ENCODE measurements at regions of chr2 and their contacts with region 1.

Region 1: DNA sequence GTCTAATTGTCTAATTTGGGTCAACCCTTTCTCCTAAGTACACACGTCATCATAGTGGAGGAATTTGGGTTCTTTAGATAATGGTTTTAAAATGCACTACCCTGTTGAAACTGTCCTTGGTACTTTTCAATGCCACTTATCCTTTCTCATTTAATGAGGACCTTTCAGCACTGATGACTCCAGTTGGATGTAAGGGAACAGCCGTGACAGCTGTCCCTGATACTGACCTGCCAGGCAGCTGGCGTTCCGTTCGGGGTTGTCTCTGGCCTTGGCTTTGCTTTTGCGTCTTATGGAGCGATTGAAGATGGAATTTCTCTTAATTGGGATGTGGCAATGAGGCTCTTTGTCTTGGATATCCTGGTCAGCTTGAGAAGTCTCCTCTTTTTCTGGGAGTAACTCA is 38.7 kb downstream of the NGEF start:
- DNase-seq: no peak
- ATAC-seq: no peak

Region 2: DNA sequence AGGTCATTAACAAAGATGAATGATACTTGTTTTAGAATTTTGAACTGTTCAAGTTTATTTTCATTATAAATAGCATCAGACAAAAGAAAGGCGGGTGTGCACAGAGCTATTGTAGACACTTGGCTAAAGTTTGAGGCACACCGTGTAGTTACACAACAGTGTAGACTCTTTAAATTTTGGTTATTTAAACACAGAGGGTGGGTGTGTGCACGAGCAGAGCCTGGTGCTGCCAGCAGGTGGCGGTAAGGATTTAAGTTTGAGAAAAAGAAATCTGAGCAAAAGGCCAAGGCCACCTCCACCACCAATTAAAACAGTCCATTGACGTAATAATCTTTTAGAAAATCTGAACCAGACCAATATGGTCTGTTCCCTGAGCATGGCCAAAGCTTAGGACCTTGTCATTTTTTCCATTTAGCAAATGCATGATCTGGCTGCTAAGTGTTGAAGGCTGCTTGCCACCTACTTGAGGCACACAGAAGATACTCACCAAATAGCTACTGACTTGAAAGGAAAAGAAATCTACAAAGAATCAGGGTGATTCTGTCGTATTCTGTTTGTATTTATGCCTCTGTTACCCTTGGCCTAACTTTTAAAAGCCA is 1173.8 kb before region 1 on chr2:
- intact Hi-C with region 1: no loop called
- DNase-seq: no peak
- ATAC-seq: no peak

Region 3: GRCh38 chr2:232574674-232575403 is 399.6 kb before region 1 on chr2:
- intact Hi-C with region 1: loop called (anchors 5 kb)
- DNase-seq: no peak
- ATAC-seq: no peak

Measured in sciatic nerve (tissue), 2 donors.